ENCODE measurements at regions of chr2 and their contacts with region 1.

Region 1: DNA sequence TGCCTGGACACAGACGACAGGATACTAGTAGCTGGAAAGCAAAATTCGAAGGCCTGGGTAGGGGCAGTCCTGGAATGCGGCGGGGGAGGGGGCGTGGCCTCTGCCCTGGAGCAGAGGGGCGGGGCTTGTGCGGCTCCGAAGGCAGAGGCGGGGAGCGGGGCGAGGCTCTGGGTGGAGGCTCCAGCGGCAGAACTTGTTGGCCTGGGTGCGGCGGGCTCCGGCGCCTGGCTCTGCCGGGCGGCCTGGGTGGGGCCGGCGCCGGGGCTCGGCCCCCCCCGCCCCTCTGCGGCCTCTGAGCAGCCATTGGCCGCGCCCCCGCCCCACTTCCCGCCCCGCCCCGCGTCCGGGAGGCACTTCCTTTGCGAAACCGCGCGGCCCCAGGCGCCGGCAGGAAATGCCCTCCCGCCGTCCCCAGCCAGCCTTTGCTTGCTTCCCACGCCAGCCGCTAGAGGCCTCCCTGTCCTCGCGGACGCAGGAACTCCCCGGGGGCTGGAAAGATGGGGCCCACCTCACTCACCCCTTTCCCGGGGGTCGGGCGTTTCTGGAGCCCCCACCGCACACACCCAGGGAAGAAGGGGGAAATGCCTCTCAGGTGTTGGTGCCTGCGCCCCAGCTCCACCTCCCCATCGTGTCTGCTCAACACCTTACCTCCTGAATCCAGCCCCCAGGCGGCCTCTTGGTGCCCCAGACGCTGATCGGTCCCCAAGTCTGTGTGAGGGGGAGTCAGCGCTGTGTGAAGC is 6.7 kb downstream of the CTDSP1 start:
- DNase-seq: peak; percentile 98
- ATAC-seq: peak; percentile 88

Region 2: DNA sequence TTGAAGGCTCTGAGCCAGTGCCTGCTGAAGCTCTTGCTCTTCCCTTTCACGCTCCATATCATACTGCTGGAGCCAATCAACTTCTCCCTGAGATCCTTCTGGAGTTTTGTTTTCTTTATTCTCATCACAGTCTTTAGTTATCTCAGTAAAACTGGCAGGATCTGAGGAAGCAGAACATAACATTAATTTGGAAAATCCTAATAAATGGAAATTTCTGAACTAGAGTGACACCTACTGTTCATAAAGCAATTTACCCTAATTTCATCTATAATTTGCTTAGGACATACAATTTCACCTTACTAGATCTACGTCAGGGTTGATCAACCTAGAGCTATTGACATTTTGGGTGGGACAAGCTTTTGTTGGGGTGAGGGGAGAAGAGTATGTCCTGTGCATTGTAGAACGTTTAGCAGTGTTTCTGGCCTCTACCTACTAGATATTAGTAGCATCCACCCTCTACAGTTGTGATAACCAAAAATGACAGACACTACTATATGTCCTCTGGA is 59.7 kb after region 1 on chr2:
- intact Hi-C with region 1: loop called (anchors 5 kb)
- DNase-seq: no peak
- ATAC-seq: peak; percentile 43

Region 3: GRCh38 chr2:218568190-218569037 is 162.0 kb after region 1 on chr2 and contains the starts of genes CNOT9 and USP37:
- intact Hi-C with region 1: loop called (anchors 2 kb)
- DNase-seq: peak; percentile 100
- ATAC-seq: peak; percentile 98
- total RNA-seq, gene CNOT9: 17.7 TPM
- total RNA-seq, gene USP37: 5.9 TPM

Region 4: GRCh38 chr2:218648088-218648786 is 241.9 kb after region 1 on chr2:
- intact Hi-C with region 1: loop called (anchors 10 kb)
- DNase-seq: peak; percentile 60
- ATAC-seq: peak; percentile 78

Measured in Right ventricle myocardium superior (tissue), 1 donor.